ENCODE measurements at regions of chr4 and their contacts with region 1.

Region 1: DNA sequence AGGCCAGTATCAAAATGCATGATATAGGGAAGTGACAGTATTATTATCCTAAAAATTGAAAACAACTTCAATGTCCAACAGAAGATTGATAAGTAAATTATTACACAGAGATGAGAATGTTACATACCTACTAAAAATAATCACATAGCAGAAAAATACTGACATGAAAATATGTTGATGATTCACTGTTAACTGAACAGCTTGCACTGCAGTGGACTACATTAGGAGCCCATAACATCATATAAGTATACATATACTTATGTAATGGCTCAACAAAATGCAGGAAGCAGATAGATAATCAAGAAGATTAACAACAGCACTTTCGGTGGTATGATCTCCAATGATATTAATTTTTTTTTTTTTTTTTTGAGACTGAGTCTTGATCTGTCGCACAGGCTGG is 7.1 kb downstream of the CLOCK start:
- DNase-seq: no peak
- H3K4me3 ChIP-seq: no peak overlapping the region
- H3K27me3 ChIP-seq: no peaks in the 10 kb centered on the region
- CTCF ChIP-seq: no peak

Region 2: DNA sequence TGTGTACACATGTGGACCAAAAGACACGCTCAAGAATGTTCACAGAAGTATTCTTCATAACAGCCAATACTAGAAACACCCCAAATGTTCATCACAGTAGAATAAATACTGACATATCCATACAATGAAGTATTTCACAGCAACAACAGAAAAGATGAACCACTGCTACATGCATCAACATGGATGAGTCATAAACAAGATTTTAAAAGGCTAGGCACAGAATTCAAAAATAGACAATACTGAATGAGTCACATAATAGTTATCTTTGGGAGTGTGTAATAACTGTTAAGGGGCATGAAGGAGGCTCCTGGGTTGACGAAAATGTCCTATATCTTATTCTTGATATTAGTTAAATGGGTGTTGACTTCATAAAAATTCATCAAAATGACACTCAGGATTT is 36.5 kb before region 1 on chr4:
- CTCF ChIA-PET with region 1: no interaction called
- POLR2A ChIA-PET with region 1: interaction called, 32 read pairs
- DNase-seq: no peak
- H3K4me3 ChIP-seq: no peak overlapping the region
- H3K27me3 ChIP-seq: no peaks in the 10 kb centered on the region
- CTCF ChIP-seq: no peak

Region 3: GRCh38 chr4:55791666-55792065 is 252.0 kb after region 1 on chr4:
- CTCF ChIA-PET with region 1: no interaction called
- POLR2A ChIA-PET with region 1: no interaction called
- DNase-seq: no peak
- H3K4me3 ChIP-seq: no peak overlapping the region
- H3K27me3 ChIP-seq: peaks cover 5% of the 10 kb centered on the region
- CTCF ChIP-seq: no peak

Region 4: DNA sequence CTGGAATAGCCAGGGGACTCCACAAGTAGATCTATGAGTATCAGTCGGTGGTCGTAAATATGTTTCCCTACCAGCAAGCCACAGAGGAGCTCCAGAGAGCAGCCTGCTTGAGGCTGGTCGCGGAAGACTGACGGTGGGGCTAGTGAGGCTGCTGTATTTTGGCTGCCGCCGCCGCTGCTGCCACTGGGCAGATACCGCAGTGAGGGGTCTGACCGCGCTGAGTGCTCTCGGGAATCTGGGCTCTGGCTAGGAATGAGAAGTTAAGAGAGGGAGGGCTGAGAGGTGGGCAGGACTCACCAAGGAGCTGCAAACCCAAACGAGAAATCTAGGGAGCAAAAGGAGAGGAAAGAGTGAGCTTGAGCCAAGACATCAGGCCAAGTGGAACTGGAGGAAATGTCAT is 280.0 kb after region 1 on chr4 and contains the start of gene EXOC1L:
- CTCF ChIA-PET with region 1: no interaction called
- POLR2A ChIA-PET with region 1: no interaction called
- DNase-seq: no peak
- H3K4me3 ChIP-seq: no peak within 1 kb of the TSS
- H3K27me3 ChIP-seq: peaks cover 2% of the 10 kb centered on the region
- CTCF ChIP-seq: no peak
- polyA plus RNA-seq, gene EXOC1L: not detected in 2 replicates

Measured in BJ (cell line).